Pancreas (tissue), 10 donors: ENCODE measurements at regions of chr17 and their contacts with region 1.

Region 1: DNA sequence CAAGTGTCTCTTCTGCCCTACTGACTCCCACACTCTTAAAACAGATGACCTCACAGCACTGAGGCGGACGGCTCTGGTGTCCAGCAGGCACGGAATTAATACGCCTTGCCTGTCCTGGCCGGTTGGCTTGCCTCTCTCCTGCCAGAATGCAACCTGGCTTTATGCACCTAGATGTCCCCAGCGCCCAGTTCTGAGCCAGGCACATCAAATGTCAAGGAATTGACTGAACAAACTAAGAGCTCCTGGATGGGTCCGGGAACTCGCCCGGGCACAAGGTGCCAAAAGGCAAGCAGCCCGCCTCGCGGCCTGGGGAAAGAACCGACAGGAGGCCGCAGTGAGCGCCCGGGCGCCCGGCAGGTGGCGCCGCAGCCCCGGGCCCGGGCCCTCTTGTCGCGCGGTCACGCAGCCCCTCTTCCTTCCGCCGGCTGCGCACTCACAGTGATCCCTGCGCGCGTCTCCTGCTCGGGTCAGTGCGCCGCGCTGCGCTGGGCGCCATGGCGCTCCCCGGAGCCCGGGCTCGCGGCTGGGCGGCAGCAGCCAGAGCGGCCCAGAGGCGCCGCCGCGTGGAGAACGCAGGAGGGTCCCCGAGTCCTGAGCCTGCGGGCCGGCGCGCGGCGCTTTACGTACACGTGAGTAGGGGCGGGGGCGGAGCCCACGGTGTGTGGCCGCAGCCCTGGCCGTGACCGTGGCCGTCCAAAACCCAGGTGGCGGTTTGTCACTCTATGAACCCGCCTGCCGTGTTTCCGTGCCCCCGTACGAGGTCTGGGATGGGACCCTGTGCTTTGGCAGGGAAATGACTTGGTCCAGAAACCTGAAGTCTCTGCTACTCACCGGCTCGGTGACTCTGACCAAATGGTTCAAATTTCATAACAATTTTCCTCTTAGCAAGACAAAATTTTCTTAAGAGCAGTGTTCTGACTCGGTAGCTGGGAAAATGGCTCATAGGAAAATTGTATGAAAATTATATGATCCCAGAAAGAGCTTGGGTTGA is at the start of gene RSAD1:
- DNase-seq: peak; percentile 86 to 95 (median 92)
- ATAC-seq: peak; percentile 80 to 85 (median 84)
- H3K4me3 ChIP-seq: peak within 1 kb of the TSS; percentile 58 to 91 (median 66)
- H3K27ac ChIP-seq: peak within 1 kb of the TSS; percentile 80 to 88 (median 84)
- H3K4me1 ChIP-seq: peaks cover 9 to 25% (median 16%) of the 10 kb centered on the region in 3 donors
- H3K27me3 ChIP-seq: no peaks in the 10 kb centered on the region
- CTCF ChIP-seq: peak; percentile 87 to 94 (median 91)
- total RNA-seq, gene RSAD1: 20.1 to 35.7 (median 30.1) TPM

Region 2: DNA sequence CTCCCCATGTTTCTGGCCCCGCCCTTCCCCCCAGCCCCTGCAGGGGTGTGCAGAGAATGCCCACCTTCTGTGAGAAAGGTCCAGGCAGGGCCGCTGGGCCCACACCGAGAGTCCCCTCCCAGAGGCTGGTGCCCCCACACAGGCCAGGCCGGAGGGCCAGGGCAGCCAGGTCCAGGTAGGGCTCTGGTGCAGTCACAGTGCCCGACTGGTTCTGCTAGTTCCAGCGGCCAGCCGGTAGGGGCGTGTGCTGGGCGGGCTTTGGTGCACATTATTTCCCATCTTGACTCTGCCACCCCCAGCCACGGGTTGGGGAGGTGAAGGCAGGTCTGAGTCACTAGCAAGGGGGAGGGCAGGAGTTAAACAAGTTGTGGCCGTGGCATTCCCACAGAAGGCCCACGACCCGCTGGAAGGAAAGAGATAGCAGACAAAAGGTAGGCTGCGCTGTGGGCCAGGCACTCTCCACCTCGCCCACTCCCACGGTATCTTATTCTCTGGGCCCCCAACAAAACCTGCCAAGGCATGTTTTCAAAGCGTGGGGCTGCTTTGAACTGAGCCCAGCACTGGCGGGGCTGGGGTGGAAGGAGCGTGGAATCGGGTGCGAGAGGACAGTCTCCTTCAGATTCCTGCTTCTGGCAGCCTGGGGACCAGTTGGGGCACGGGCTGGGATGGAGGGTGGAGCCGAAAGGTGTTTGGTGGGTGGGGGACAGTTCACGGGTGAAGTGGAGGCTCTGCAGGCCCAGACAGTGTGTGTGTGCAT is 55.7 kb after region 1 on chr17:
- intact Hi-C with region 1: loop called in 2 of 3 experiments (anchors 5 to 10 kb)
- DNase-seq: peak; percentile 81 to 92 (median 84)
- ATAC-seq: peak; percentile 80 to 87 (median 84)
- H3K4me3 ChIP-seq: peak overlapping the region; percentile 13 to 53 (median 34)
- H3K27ac ChIP-seq: peak overlapping the region; percentile 73 to 92 (median 80)
- H3K4me1 ChIP-seq: peaks cover 9 to 35% (median 17%) of the 10 kb centered on the region in 3 donors
- H3K27me3 ChIP-seq: no peaks in the 10 kb centered on the region
- CTCF ChIP-seq: peak; percentile 25 to 59 (median 50)

Region 3: DNA sequence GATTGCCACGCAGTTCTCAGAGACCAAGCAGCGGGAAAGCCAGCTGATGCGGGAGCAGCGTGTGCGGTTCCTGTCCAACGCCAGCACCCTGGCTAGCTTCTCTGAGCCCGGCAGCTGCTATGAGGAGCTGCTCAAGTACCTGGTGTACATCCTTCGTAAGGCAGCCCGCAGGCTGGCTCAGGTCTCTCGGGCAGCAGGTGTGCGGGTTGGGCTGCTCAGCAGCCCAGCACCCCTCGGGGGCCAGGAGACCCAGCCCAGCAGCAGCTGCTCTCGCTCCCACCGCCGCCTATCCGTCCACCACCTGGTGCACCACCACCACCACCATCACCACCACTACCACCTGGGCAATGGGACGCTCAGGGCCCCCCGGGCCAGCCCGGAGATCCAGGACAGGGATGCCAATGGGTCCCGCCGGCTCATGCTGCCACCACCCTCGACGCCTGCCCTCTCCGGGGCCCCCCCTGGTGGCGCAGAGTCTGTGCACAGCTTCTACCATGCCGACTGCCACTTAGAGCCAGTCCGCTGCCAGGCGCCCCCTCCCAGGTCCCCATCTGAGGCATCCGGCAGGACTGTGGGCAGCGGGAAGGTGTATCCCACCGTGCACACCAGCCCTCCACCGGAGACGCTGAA is 97.0 kb after region 1 on chr17:
- intact Hi-C with region 1: no loop called
- DNase-seq: no peak
- ATAC-seq: peak in 2 of 4 donors; percentile 22 to 33
- H3K4me3 ChIP-seq: no peak overlapping the region
- H3K27ac ChIP-seq: no peak overlapping the region
- H3K4me1 ChIP-seq: no peaks in the 10 kb centered on the region
- H3K27me3 ChIP-seq: no peaks in the 10 kb centered on the region
- CTCF ChIP-seq: no peak

Region 4: DNA sequence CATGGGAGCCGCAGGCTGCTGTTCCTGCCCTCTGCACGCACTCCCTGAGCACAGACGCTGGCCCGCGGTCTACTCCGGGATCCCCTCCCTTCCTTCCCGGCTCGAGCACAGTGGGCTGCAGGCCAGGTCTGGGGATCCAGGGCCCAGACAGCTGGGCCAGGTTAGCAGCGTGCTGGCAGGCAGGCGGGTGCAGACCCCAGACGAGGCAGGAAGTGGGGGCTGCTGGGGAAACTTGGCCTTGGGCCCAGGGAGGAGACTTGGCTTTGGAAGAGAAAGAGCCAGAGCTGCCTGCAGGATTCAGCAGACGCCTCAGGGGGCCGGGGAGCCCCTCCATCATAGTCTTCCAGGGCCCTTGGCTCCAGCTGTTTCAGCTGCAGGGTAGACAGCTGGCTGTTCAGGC is 125.8 kb after region 1 on chr17:
- intact Hi-C with region 1: loop called in 1 of 3 experiments (anchors 10 kb)
- DNase-seq: no peak
- ATAC-seq: peak in 3 of 4 donors; percentile 49 to 56 (median 51)
- H3K4me3 ChIP-seq: no peak overlapping the region
- H3K27ac ChIP-seq: no peak overlapping the region
- H3K4me1 ChIP-seq: no peaks in the 10 kb centered on the region
- H3K27me3 ChIP-seq: no peaks in the 10 kb centered on the region
- CTCF ChIP-seq: no peak

Region 5: DNA sequence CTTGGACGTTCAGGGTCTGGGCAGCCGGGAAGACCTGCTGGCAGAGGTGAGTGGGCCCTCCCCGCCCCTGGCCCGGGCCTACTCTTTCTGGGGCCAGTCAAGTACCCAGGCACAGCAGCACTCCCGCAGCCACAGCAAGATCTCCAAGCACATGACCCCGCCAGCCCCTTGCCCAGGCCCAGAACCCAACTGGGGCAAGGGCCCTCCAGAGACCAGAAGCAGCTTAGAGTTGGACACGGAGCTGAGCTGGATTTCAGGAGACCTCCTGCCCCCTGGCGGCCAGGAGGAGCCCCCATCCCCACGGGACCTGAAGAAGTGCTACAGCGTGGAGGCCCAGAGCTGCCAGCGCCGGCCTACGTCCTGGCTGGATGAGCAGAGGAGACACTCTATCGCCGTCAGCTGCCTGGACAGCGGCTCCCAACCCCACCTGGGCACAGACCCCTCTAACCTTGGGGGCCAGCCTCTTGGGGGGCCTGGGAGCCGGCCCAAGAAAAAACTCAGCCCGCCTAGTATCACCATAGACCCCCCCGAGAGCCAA is 147.4 kb after region 1 on chr17:
- intact Hi-C with region 1: loop called in 2 of 3 experiments (anchors 5 to 10 kb)
- DNase-seq: peak; percentile 66 to 91 (median 80)
- ATAC-seq: peak; percentile 60 to 78 (median 68)
- H3K4me3 ChIP-seq: no peak overlapping the region
- H3K27ac ChIP-seq: no peak overlapping the region
- H3K4me1 ChIP-seq: peaks cover 0 to 8% (median 0%) of the 10 kb centered on the region in 3 donors
- H3K27me3 ChIP-seq: no peaks in the 10 kb centered on the region
- CTCF ChIP-seq: peak; percentile 51 to 84 (median 70)

Region 6: DNA sequence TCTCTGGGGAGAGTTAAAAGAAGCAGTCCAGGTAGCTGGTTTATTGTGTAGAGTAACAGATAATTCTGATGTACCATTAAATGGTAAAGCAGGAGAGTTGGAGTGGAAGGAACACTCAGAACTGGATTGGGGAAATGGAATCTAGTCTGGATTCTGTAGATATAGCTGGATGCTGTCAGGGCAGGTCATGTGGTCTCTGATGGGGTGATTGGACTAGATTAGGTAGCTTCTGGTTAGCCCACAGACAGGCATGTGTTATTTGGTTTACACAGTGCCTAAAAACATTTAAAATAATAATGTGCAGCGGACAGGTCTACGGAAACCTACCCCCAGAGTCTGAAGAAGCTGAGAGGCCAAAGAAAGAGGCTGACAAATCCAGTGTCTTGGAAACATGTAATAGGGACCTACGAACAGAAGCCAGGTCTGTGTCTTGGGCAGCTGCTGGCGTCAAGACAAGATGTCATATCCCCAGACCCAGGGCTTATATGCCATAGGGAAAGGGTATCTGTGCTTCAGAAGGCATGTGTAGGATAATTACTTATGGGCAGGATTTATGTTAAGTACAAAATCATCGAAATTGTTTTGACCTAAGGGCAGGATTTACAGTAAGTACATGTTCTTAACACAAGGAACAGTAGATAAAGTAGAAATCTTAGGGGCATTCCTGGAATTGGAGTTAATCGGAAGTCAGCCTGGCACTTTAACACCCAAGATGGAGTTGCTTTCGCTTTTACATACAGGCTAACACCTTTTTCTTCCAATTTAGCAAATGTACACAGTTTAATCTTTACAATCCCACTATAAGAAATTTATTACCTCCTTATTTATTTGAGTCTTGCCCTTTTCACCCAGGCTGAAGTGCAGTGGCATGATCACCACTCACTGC is 253.1 kb after region 1 on chr17:
- intact Hi-C with region 1: no loop called
- DNase-seq: no peak
- ATAC-seq: peak in 3 of 4 donors; percentile 33 to 47 (median 38)
- H3K4me3 ChIP-seq: no peak overlapping the region
- H3K27ac ChIP-seq: no peak overlapping the region
- H3K4me1 ChIP-seq: peaks cover 15 to 39% (median 15%) of the 10 kb centered on the region in 3 donors
- H3K27me3 ChIP-seq: no peaks in the 10 kb centered on the region
- CTCF ChIP-seq: no peak